Body of pancreas (tissue), 4 donors: ENCODE measurements at regions of chr9 and their contacts with region 1.

Region 1: GRCh38 chr9:89597711-89598625 is 6.8 kb upstream of the GADD45G start:
- DNase-seq: peak; percentile 66 to 75 (median 74)
- ATAC-seq: peak; percentile 69
- H3K4me3 ChIP-seq: no peak overlapping the region
- H3K27ac ChIP-seq: no peak overlapping the region
- H3K4me1 ChIP-seq: peaks cover 5% of the 10 kb centered on the region
- H3K27me3 ChIP-seq: no peaks in the 10 kb centered on the region
- CTCF ChIP-seq: peak; percentile 62 to 93 (median 90)
- POLR2A ChIP-seq: no peak

Region 2: DNA sequence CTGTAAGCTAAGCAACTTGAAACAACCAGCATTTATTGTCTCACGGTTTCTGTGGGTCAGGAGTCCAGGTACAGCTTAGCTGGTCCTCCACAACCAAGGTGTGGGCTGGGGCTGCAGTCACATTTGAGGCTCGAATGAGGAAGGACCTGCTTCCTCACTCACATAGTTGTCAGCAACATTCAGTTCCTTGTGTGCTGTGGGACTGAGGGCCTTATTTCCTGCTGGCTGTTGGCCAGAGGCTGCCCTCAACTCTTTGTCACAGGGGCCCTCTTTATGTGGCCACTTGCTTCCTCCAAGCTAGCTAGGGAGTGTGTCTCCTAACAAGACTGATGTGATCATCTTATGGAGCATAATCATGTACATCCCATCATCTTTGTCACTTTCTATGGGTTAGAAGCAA is 70.9 kb before region 1 on chr9:
- intact Hi-C with region 1: no loop called
- DNase-seq: peak in 2 of 4 donors; percentile 19 to 71
- ATAC-seq: no peak
- H3K4me3 ChIP-seq: no peak overlapping the region
- H3K27ac ChIP-seq: no peak overlapping the region
- H3K4me1 ChIP-seq: peaks cover 6% of the 10 kb centered on the region
- H3K27me3 ChIP-seq: no peaks in the 10 kb centered on the region
- CTCF ChIP-seq: no peak
- POLR2A ChIP-seq: no peak

Region 3: GRCh38 chr9:89919169-89919681 is 321.3 kb after region 1 on chr9:
- intact Hi-C with region 1: loop called (anchors 10 kb)
- DNase-seq: peak; percentile 61 to 67 (median 64)
- ATAC-seq: peak; percentile 82
- H3K4me3 ChIP-seq: no peak overlapping the region
- H3K27ac ChIP-seq: no peak overlapping the region
- H3K4me1 ChIP-seq: peaks cover 7% of the 10 kb centered on the region
- H3K27me3 ChIP-seq: no peaks in the 10 kb centered on the region
- CTCF ChIP-seq: peak; percentile 12 to 65 (median 54)
- POLR2A ChIP-seq: no peak

Region 4: GRCh38 chr9:90095682-90096081 is 497.7 kb after region 1 on chr9:
- intact Hi-C with region 1: loop called (anchors 2 kb)
- DNase-seq: peak; percentile 73 to 88 (median 83)
- ATAC-seq: peak; percentile 85
- H3K4me3 ChIP-seq: no peak overlapping the region
- H3K27ac ChIP-seq: peak overlapping the region in 3 of 4 donors; percentile 45 to 61 (median 51)
- H3K4me1 ChIP-seq: peaks cover 11% of the 10 kb centered on the region
- H3K27me3 ChIP-seq: no peaks in the 10 kb centered on the region
- CTCF ChIP-seq: no peak
- POLR2A ChIP-seq: no peak